Body of pancreas (tissue), 4 donors: ENCODE measurements at regions of chr21 and their contacts with region 1.

Region 1: GRCh38 chr21:44962403-44962966 is 22.7 kb downstream of the SLX9 start:
- DNase-seq: peak in 1 of 4 donors; percentile 42
- ATAC-seq: peak; percentile 39
- H3K4me3 ChIP-seq: no peak overlapping the region
- H3K27ac ChIP-seq: no peak overlapping the region
- H3K4me1 ChIP-seq: no peaks in the 10 kb centered on the region
- H3K27me3 ChIP-seq: no peaks in the 10 kb centered on the region
- CTCF ChIP-seq: no peak
- POLR2A ChIP-seq: no peak

Region 2: DNA sequence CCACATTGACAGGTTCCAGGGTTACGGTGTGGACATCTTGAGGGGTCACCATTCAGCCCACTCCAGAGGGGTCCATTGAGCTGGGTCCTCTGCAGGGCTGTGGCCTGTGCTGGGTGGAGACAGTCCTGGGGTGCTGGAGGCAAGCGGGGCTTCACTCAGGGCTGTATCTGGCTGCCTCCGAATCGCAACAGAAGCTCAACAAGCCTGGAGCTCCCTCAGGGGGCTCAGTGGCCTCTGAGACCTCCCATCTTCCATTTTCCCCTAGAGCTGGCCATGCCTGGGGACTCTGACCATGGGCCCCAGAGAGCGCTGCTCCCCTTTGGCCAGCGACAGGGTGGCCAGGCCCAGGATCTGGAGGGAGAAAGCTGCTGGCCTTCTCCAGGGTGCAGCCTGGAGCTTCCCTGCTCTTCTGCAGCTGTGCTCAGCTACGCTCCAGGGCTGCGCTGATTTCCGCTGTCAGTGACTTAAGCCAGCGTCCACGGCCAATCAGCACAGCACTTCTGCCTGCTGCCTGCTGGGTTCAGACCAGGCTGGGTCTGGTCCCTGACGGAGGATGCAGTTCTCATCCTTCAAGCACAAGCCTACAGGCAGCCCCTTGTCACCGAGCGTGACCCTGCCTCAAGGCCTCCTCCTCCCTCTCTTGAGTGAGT is 66.9 kb after region 1 on chr21:
- intact Hi-C with region 1: loop called (anchors 10 kb)
- DNase-seq: peak in 1 of 4 donors; percentile 25
- ATAC-seq: peak; percentile 31
- H3K4me3 ChIP-seq: no peak overlapping the region
- H3K27ac ChIP-seq: peak overlapping the region in 1 of 4 donors; percentile 24
- H3K4me1 ChIP-seq: peaks cover 28% of the 10 kb centered on the region
- H3K27me3 ChIP-seq: no peaks in the 10 kb centered on the region
- CTCF ChIP-seq: no peak
- POLR2A ChIP-seq: no peak